ENCODE measurements at regions of chr3 and their contacts with region 1.

Region 1: DNA sequence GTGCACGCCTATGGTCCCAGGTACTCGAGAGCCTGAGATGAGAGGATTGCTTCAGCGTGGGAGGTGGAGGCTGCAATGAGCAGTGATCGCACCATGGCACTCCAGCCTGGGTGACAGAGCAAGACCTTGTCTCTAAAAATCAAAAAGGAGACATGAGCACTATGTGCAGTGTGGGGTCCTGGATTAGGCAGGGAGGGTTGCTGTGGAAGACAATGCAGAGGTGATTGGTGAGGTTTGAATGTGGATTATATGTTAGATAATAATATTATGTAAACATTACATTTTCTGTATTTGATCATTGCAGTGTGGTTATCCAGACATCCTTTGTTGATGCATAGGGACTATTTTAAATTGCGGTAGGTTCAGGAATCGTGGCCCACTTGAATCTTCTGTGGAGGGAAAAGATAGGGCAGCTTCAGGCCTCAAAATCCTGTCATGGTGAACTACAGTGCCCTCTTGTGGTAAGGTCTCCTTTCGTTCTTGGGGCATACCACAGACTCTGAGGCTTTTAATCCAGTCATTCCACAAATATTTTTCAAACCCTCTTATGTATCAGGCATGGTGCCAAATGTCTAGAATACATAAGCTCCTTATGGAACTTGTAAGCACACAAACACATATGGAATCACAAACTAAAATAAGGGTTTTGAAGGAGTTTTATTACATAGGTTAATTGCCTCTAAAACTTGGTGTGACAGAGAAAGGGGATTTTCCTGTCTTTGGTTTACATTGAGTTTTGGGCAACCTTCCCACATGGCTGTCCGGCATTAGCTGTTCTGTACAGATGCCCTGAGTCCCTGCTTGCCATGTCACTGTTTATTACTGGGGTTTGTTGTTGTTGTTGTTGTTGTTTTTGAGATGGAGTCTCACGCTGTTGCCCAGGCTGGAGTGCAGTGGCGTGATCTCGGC is 37.7 kb downstream of the GPD1L start:
- DNase-seq: no peak
- ATAC-seq: peak; percentile 66
- H3K4me3 Mint-ChIP-seq: no peak overlapping the region
- H3K27ac Mint-ChIP-seq: no peak overlapping the region
- H3K4me1 Mint-ChIP-seq: peaks cover 25% of the 10 kb centered on the region
- H3K27me3 Mint-ChIP-seq: no peaks in the 10 kb centered on the region
- CTCF ChIP-seq: peak; percentile 74

Region 2: GRCh38 chr3:31550452-31551251 is 593.5 kb before region 1 on chr3:
- CTCF ChIA-PET with region 1: interaction called, 4 read pairs
- POLR2A ChIA-PET with region 1: no interaction called
- intact Hi-C with region 1: loop called (anchors 1 kb)
- DNase-seq: no peak
- ATAC-seq: peak; percentile 49
- H3K4me3 Mint-ChIP-seq: no peak overlapping the region
- H3K27ac Mint-ChIP-seq: peak overlapping the region; percentile 13
- H3K4me1 Mint-ChIP-seq: peaks cover 63% of the 10 kb centered on the region
- H3K27me3 Mint-ChIP-seq: no peaks in the 10 kb centered on the region
- CTCF ChIP-seq: no peak

Region 3: GRCh38 chr3:31724661-31725060 is 419.4 kb before region 1 on chr3:
- CTCF ChIA-PET with region 1: interaction called, 18 read pairs
- POLR2A ChIA-PET with region 1: no interaction called
- intact Hi-C with region 1: loop called (anchors 1 kb)
- DNase-seq: no peak
- ATAC-seq: peak; percentile 60
- H3K4me3 Mint-ChIP-seq: no peak overlapping the region
- H3K27ac Mint-ChIP-seq: no peak overlapping the region
- H3K4me1 Mint-ChIP-seq: peaks cover 7% of the 10 kb centered on the region
- H3K27me3 Mint-ChIP-seq: no peaks in the 10 kb centered on the region
- CTCF ChIP-seq: no peak

Region 4: DNA sequence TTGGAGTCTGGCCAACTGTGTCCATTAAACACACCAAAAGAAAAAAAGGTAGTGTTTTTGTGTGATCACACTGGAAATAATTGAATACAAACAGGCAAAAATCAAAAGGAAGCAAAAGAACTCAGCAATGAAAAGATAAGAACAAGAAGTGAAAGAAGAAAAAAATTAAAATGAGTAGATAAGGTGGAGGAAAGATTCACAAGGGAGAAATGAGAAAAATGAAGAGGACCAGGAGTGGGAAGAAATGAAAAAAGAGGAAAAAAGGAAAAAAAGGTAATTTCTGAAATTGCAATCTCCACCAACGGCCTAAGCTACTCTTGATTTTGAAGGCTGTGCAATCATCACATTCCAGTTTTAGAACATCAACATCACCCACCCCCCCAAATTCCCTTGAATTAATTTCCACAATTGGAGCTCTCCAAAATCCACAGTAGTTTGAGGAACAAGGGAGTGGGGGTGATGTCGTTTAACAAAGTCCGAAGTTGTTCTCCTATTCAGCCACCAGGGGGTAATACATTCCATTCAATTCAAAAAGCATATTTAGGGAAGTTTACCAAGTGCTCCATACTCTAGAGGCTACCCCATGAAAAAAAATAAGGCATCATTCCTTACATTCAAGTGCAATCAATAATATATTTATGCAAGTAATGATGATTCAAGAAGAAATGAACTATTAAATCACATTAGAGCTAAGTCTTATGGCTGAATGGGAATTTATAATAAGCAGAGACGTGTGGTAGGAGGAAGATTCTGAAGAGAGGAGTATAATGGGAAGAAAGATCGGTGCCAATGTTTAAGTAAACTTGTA is 125.1 kb before region 1 on chr3:
- CTCF ChIA-PET with region 1: interaction called, 19 read pairs
- POLR2A ChIA-PET with region 1: interaction called, 3 read pairs
- intact Hi-C with region 1: loop called (anchors 1 kb)
- DNase-seq: no peak
- ATAC-seq: peak; percentile 65
- H3K4me3 Mint-ChIP-seq: no peak overlapping the region
- H3K27ac Mint-ChIP-seq: no peak overlapping the region
- H3K4me1 Mint-ChIP-seq: peaks cover 12% of the 10 kb centered on the region
- H3K27me3 Mint-ChIP-seq: no peaks in the 10 kb centered on the region
- CTCF ChIP-seq: no peak

Measured in activated B cell treated with CpG ODN at 0.5 μM for 24 hours (primary cell).